ENCODE measurements at regions of chr6 and their contacts with region 1.

Region 1: GRCh38 chr6:70221025-70221714 is 81.7 kb downstream of the COL9A1 start:
- DNase-seq: no peak
- H3K4me3 ChIP-seq: no peak overlapping the region
- H3K27ac ChIP-seq: no peak overlapping the region
- H3K4me1 ChIP-seq: peaks cover 0 to 3% (median 0%) of the 10 kb centered on the region in 4 experiments; a peak in 2 of 7 replicates
- H3K27me3 ChIP-seq: no peaks in the 10 kb centered on the region
- CTCF ChIP-seq: peak in 2 of 3 experiments; percentile 31 to 69; a peak in 3 of 4 replicates
- EP300 ChIP-seq: no peak
- POLR2A ChIP-seq: no peak
- RAD21 ChIP-seq: peak; percentile 87 to 88

Region 2: GRCh38 chr6:70166088-70166958 is 54.8 kb before region 1 on chr6:
- CTCF ChIA-PET with region 1: no interaction called
- POLR2A ChIA-PET with region 1: no interaction called
- DNase-seq: peak; percentile 17 to 79
- H3K4me3 ChIP-seq: peak overlapping the region in 2 of 4 experiments; percentile 17 to 45; a peak in 2 of 8 replicates
- H3K27ac ChIP-seq: no peak overlapping the region
- H3K4me1 ChIP-seq: no peaks in the 10 kb centered on the region
- H3K27me3 ChIP-seq: no peaks in the 10 kb centered on the region
- CTCF ChIP-seq: peak; percentile 67 to 93 (median 85)
- EP300 ChIP-seq: no peak
- POLR2A ChIP-seq: no peak
- RAD21 ChIP-seq: peak; percentile 91 to 94

Region 3: GRCh38 chr6:70231311-70231710 is 10.1 kb after region 1 on chr6:
- CTCF ChIA-PET with region 1: interaction called, 38 read pairs
- POLR2A ChIA-PET with region 1: interaction called, 4 read pairs
- DNase-seq: no peak
- H3K4me3 ChIP-seq: no peak overlapping the region
- H3K27ac ChIP-seq: no peak overlapping the region
- H3K4me1 ChIP-seq: peaks cover 0 to 3% (median 2%) of the 10 kb centered on the region in 4 experiments; a peak in 2 of 7 replicates
- H3K27me3 ChIP-seq: no peaks in the 10 kb centered on the region
- CTCF ChIP-seq: no peak
- EP300 ChIP-seq: no peak
- POLR2A ChIP-seq: no peak
- RAD21 ChIP-seq: no peak

Region 4: DNA sequence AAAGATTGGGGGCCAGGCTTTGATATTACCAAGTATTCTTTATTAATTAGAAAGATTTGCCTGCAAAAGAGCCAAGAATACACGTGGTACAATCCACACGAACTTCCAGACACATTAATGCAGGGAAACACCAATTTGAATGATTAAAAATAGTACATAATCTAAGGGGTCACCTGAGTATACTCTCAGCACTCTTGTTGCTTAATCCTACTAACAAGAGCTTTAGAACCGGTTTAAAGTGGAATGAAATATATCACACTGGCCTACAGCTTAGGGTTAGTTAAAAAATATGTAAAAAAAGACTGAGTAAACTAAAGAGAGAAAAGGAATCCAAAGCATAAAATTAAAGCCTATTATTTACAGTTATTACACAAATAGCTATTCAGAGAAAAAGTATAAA is 32.8 kb after region 1 on chr6:
- CTCF ChIA-PET with region 1: interaction called, 12 read pairs
- POLR2A ChIA-PET with region 1: no interaction called
- DNase-seq: no peak
- H3K4me3 ChIP-seq: no peak overlapping the region
- H3K27ac ChIP-seq: no peak overlapping the region
- H3K4me1 ChIP-seq: no peaks in the 10 kb centered on the region
- H3K27me3 ChIP-seq: no peaks in the 10 kb centered on the region
- CTCF ChIP-seq: no peak
- EP300 ChIP-seq: no peak
- POLR2A ChIP-seq: no peak
- RAD21 ChIP-seq: no peak

Region 5: DNA sequence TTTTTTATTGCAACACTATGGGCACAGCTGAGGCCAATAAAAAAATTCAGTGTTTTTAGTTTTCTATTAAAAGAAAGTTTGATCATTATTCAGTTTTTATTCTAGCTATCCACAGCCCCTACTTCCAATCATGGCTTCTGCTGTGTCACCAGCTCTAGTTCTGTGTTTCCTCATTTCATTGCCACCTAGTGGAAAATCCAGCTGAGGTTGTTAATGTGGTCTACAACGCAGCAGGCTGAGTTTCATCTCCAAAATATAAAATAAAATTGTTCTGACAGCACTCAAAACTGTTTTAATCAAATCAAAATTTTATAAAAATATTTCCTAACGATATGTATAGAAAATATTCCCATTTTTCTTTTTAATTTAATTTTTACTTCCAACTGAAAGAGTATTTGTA is 68.1 kb after region 1 on chr6:
- CTCF ChIA-PET with region 1: interaction called, 62 read pairs
- POLR2A ChIA-PET with region 1: no interaction called
- DNase-seq: no peak
- H3K4me3 ChIP-seq: no peak overlapping the region
- H3K27ac ChIP-seq: no peak overlapping the region
- H3K4me1 ChIP-seq: no peaks in the 10 kb centered on the region
- H3K27me3 ChIP-seq: no peaks in the 10 kb centered on the region; a peak in 1 of 7 replicates
- CTCF ChIP-seq: peak in 2 of 3 experiments; percentile 26 to 36; a peak in 2 of 4 replicates
- EP300 ChIP-seq: no peak
- POLR2A ChIP-seq: no peak
- RAD21 ChIP-seq: peak; percentile 27 to 38; a peak in 3 of 4 replicates

Region 6: DNA sequence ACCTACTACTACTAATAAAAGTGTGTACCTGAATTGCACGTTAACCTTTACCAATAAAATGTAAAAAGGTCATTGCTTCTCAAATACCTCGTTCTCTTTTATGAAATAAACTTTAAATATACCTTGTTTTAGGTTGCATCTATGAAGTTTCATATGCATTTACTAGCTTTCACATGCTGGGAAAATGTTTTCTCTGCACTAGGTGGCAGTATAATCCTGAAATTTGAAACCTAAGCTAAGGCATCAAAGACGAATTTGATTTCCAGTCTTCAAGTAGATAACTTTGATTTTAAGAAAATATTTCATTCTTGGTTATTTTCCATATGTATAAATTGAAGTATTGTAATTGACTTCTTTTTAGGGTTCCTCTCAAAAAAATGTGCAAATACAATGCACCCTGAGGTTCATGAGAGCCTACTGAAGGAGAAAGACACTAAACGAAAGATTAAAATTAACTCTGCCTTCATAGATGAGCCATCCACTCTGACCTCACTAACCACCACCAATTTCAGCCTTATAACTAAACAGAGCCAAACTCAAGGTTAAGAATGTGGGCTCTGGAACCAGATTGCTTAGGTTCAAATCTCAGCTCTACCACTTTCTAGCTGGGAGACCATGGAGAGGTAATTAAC is 89.0 kb after region 1 on chr6:
- CTCF ChIA-PET with region 1: interaction called, 54 read pairs
- POLR2A ChIA-PET with region 1: no interaction called
- DNase-seq: no peak
- H3K4me3 ChIP-seq: no peak overlapping the region
- H3K27ac ChIP-seq: no peak overlapping the region
- H3K4me1 ChIP-seq: no peaks in the 10 kb centered on the region; a peak in 1 of 7 replicates
- H3K27me3 ChIP-seq: no peaks in the 10 kb centered on the region
- CTCF ChIP-seq: peak in 2 of 3 experiments; percentile 51 to 58; a peak in 2 of 4 replicates
- EP300 ChIP-seq: no peak
- POLR2A ChIP-seq: no peak
- RAD21 ChIP-seq: peak; percentile 66 to 72

Region 7: GRCh38 chr6:70375882-70376281 is 154.7 kb after region 1 on chr6:
- CTCF ChIA-PET with region 1: interaction called, 149 read pairs
- POLR2A ChIA-PET with region 1: no interaction called
- DNase-seq: peak in 1 of 2 experiments; percentile 47
- H3K4me3 ChIP-seq: no peak overlapping the region
- H3K27ac ChIP-seq: no peak overlapping the region
- H3K4me1 ChIP-seq: no peaks in the 10 kb centered on the region; a peak in 1 of 7 replicates
- H3K27me3 ChIP-seq: no peaks in the 10 kb centered on the region
- CTCF ChIP-seq: peak in 2 of 3 experiments; percentile 40 to 67; a peak in 3 of 4 replicates
- EP300 ChIP-seq: no peak
- POLR2A ChIP-seq: no peak
- RAD21 ChIP-seq: peak; percentile 56 to 62